ENCODE measurements at regions of chr4 and their contacts with region 1.

Region 1: DNA sequence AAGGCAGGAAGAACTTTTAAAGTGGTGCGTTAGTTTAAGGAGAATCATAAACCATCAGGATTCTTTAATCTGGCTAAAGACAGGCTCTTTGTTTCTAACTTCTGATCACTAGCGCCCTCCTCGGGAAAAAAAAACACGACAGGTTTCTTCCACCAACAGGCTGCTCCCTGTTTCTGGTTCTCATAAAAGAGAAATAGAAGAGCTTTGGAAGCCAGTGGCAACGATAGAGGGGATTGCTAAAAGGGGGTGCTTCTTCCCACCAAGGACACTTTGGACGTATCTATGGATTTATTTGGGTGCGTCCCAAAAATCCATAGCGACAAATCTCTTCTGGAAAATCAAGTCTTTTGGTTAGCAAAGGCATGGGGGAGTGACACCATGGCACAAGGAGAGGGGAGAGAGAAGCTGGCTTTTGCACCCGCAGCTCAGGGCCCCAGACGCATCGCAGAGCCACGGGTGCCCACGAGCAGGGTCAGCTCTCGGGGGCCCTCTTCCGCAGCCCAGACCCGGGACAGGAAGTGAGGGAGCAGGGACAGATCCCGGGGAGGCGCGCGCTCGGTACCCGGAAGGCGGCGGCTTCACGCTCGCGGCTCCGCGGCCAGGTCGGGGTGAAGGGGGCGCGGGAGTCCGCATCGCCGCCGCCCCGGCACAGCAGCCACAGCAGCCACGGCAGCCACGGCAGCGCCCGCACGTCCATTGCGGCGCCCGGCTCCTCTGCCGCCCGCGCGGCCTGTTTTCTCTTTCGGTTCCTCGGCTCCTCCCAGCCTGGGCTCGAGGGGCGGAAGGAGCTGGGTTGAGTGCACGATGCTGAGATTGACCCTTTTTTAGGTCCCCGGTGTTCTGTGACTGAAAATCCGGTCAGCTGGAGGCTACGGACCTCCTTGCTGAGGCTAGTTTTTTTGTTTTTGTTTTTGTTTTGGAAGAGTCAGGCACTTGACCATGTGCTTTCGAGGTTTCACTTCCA is at the start of gene CTSO:
- DNase-seq: peak; percentile 48
- ATAC-seq: peak; percentile 96
- H3K4me3 ChIP-seq: peak within 1 kb of the TSS; percentile 77
- H3K27ac ChIP-seq: peak within 1 kb of the TSS; percentile 89
- H3K4me1 ChIP-seq: no peaks in the 10 kb centered on the region
- H3K27me3 ChIP-seq: no peaks in the 10 kb centered on the region
- CTCF ChIP-seq: peak; percentile 46 to 69 (median 53); a peak in 5 of 6 replicates
- EP300 ChIP-seq: no peak
- POLR2A ChIP-seq: peak; percentile 94
- RAD21 ChIP-seq: peak; percentile 65
- polyA plus RNA-seq, gene CTSO: 3.9 to 4.6 TPM

Region 2: GRCh38 chr4:155376387-155377268 is 576.8 kb before region 1 on chr4 and contains the start of gene MAP9:
- CTCF ChIA-PET with region 1: interaction called, 7 read pairs
- POLR2A ChIA-PET with region 1: no interaction called
- RAD21 ChIA-PET with region 1: interaction called, 9 read pairs
- SMC1A ChIA-PET with region 1: interaction called, 5 read pairs
- in situ Hi-C with region 1: no loop called
- intact Hi-C with region 1: loop called (anchors 10 kb)
- DNase-seq: peak; percentile 78
- ATAC-seq: peak; percentile 97
- H3K4me3 ChIP-seq: peak within 1 kb of the TSS; percentile 55
- H3K27ac ChIP-seq: peak within 1 kb of the TSS; percentile 46
- H3K4me1 ChIP-seq: peaks cover 3% of the 10 kb centered on the region; the same call in 1 of the 2 replicates
- H3K27me3 ChIP-seq: no peaks in the 10 kb centered on the region
- CTCF ChIP-seq: no peak
- EP300 ChIP-seq: no peak
- POLR2A ChIP-seq: peak; percentile 28; the same call in 1 of the 2 replicates
- RAD21 ChIP-seq: no peak
- polyA plus RNA-seq, gene MAP9: 3.2 to 6.1 TPM

Region 3: GRCh38 chr4:155667568-155668511 is 285.6 kb before region 1 on chr4:
- CTCF ChIA-PET with region 1: interaction called, 4 read pairs
- POLR2A ChIA-PET with region 1: no interaction called
- RAD21 ChIA-PET with region 1: interaction called, 5 read pairs
- SMC1A ChIA-PET with region 1: no interaction called
- in situ Hi-C with region 1: no loop called
- intact Hi-C with region 1: loop called (anchors 5 kb)
- DNase-seq: no peak
- ATAC-seq: peak; percentile 71
- H3K4me3 ChIP-seq: peak overlapping the region; percentile 41
- H3K27ac ChIP-seq: no peak overlapping the region
- H3K4me1 ChIP-seq: no peaks in the 10 kb centered on the region; the same call in 1 of the 2 replicates
- H3K27me3 ChIP-seq: peaks cover 4 to 21% of the 10 kb centered on the region in 2 experiments; a peak in 3 of 4 replicates
- CTCF ChIP-seq: no peak
- EP300 ChIP-seq: no peak
- POLR2A ChIP-seq: peak; percentile 41; the same call in 1 of the 2 replicates
- RAD21 ChIP-seq: no peak

Region 4: DNA sequence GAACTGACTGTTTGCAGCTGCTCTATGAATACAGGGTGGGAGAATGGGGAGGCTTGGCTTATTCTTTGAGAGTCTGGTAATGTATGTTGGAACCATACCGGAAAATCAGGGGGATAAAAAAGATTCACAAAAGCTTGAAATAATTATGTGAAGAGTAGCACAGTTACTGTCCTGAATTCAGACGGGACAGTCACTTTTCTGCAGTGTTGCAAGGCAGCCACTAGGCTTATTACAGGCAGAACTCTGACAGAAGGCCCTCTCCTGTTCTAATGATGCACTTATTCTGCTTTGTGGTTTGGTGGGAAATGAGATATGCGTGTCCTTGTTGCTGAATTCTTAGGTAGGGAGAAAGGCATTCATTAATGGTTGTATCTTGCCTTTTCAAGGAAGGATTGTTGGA is 157.4 kb before region 1 on chr4:
- CTCF ChIA-PET with region 1: interaction called, 12 read pairs
- POLR2A ChIA-PET with region 1: interaction called, 6 read pairs
- RAD21 ChIA-PET with region 1: interaction called, 12 read pairs
- SMC1A ChIA-PET with region 1: interaction called, 11 read pairs
- in situ Hi-C with region 1: no loop called
- intact Hi-C with region 1: no loop called
- DNase-seq: no peak
- ATAC-seq: peak; percentile 92
- H3K4me3 ChIP-seq: no peak overlapping the region
- H3K27ac ChIP-seq: no peak overlapping the region
- H3K4me1 ChIP-seq: no peaks in the 10 kb centered on the region
- H3K27me3 ChIP-seq: no peaks in the 10 kb centered on the region
- CTCF ChIP-seq: peak; percentile 11 to 44 (median 33); a peak in 4 of 6 replicates
- EP300 ChIP-seq: no peak
- POLR2A ChIP-seq: no peak
- RAD21 ChIP-seq: no peak

Region 5: DNA sequence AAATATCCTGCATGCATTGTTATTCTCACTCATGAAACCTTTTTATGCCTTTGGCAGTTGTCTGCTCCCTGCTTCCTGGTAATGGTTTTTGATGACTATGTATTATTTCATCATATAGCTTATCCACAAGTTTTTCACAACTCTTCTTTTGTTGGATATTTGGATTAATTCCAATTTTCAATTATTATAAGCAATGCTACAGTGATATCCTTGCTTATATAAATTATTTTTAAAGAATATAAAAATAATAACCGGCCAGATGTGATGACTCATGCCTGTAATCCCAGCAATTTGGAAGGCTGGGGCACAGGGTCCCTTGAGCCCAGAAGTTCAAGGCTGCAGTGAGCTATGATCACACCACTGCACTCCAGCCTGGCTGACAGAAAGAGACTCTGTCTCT is 134.4 kb before region 1 on chr4:
- CTCF ChIA-PET with region 1: interaction called, 10 read pairs
- POLR2A ChIA-PET with region 1: no interaction called
- RAD21 ChIA-PET with region 1: interaction called, 5 read pairs
- SMC1A ChIA-PET with region 1: interaction called, 19 read pairs
- in situ Hi-C with region 1: no loop called
- intact Hi-C with region 1: no loop called
- DNase-seq: no peak
- ATAC-seq: no peak
- H3K4me3 ChIP-seq: no peak overlapping the region
- H3K27ac ChIP-seq: no peak overlapping the region
- H3K4me1 ChIP-seq: no peaks in the 10 kb centered on the region
- H3K27me3 ChIP-seq: no peaks in the 10 kb centered on the region
- CTCF ChIP-seq: no peak
- EP300 ChIP-seq: no peak
- POLR2A ChIP-seq: no peak
- RAD21 ChIP-seq: no peak

Region 6: DNA sequence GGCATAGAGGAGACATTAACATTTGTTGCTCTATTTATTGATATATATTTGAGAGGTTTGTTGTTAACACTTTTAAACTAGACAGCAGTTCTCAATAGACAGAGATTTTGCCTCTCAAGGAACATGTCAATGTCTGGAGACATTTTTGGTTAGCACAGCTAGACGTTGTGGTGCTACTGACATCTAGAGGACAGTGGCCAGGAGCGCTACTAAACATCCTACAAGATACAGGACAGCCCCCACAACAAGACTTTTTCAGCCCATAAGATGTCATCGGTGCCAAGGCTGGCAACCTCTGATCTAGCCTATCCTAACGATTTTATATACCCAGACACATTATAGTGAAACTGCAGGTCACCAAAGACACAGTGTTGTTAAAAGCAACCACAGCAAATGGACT is 18.7 kb after region 1 on chr4:
- CTCF ChIA-PET with region 1: interaction called, 15 read pairs
- POLR2A ChIA-PET with region 1: interaction called, 3 read pairs
- RAD21 ChIA-PET with region 1: interaction called, 15 read pairs
- SMC1A ChIA-PET with region 1: interaction called, 9 read pairs
- in situ Hi-C with region 1: no loop called
- intact Hi-C with region 1: no loop called
- DNase-seq: peak; percentile 8
- ATAC-seq: peak; percentile 76
- H3K4me3 ChIP-seq: no peak overlapping the region
- H3K27ac ChIP-seq: no peak overlapping the region
- H3K4me1 ChIP-seq: peaks cover 11% of the 10 kb centered on the region
- H3K27me3 ChIP-seq: no peaks in the 10 kb centered on the region
- CTCF ChIP-seq: peak; percentile 41 to 49 (median 44); a peak in 5 of 6 replicates
- EP300 ChIP-seq: no peak
- POLR2A ChIP-seq: no peak
- RAD21 ChIP-seq: peak; percentile 68

Region 7: DNA sequence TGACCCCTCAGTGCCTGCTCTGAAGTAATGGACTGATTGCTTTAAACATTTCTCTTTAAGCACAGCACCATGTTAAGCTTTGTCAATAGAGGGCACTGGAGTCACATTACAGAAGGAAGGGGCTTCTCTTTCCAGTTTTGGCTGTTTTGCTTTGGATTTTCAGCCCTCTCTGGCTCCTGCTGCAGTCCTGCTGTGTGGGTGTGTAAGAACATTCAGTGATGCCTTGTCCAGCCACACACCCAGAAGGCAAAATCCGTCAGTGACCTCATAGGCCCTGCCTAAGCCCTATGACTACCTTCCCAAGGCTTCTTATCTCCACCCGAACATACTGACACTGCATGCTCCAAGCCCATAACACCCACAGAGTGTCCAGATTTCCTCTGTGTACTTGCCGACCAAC is 215.6 kb after region 1 on chr4:
- CTCF ChIA-PET with region 1: no interaction called
- POLR2A ChIA-PET with region 1: no interaction called
- RAD21 ChIA-PET with region 1: no interaction called
- SMC1A ChIA-PET with region 1: no interaction called
- in situ Hi-C with region 1: no loop called
- intact Hi-C with region 1: no loop called
- DNase-seq: no peak
- ATAC-seq: peak; percentile 89
- H3K4me3 ChIP-seq: no peak overlapping the region
- H3K27ac ChIP-seq: no peak overlapping the region
- H3K4me1 ChIP-seq: no peaks in the 10 kb centered on the region
- H3K27me3 ChIP-seq: no peaks in the 10 kb centered on the region
- CTCF ChIP-seq: peak; percentile 61 to 72 (median 66)
- EP300 ChIP-seq: no peak
- POLR2A ChIP-seq: no peak
- RAD21 ChIP-seq: peak; percentile 98

Region 8: DNA sequence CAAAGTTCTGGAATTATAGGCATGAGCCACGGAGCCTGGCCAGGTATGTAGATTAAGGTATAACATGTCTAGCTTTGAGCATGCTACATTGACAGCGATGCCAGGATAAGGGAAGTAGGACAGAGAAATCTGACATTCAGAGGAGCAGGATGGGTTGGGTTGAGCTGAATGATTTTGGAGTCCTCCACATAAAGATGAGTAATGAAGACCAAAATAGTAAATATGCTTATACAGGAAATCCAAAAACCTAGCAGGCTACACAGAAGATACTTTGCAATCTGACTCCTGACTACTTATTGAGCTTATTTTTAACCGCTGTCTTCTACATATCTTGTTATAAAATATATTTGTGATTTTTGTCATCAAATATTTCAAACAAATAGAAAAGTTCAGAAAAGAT is 948.4 kb after region 1 on chr4:
- CTCF ChIA-PET with region 1: no interaction called
- POLR2A ChIA-PET with region 1: no interaction called
- RAD21 ChIA-PET with region 1: no interaction called
- SMC1A ChIA-PET with region 1: no interaction called
- in situ Hi-C with region 1: no loop called
- intact Hi-C with region 1: no loop called
- DNase-seq: no peak
- ATAC-seq: no peak
- H3K4me3 ChIP-seq: no peak overlapping the region
- H3K27ac ChIP-seq: no peak overlapping the region
- H3K4me1 ChIP-seq: no peaks in the 10 kb centered on the region
- H3K27me3 ChIP-seq: no peaks in the 10 kb centered on the region
- CTCF ChIP-seq: no peak
- EP300 ChIP-seq: no peak
- POLR2A ChIP-seq: no peak
- RAD21 ChIP-seq: no peak